ENCODE measurements at regions of chr1 and their contacts with region 1.

Region 1: GRCh38 chr1:91997607-91998195 is 32.1 kb upstream of the EPHX4 start:
- DNase-seq: peak; percentile 75
- H3K4me3 Mint-ChIP-seq: no peak overlapping the region
- H3K27ac Mint-ChIP-seq: no peak overlapping the region
- H3K4me1 Mint-ChIP-seq: no peaks in the 10 kb centered on the region
- H3K27me3 Mint-ChIP-seq: no peaks in the 10 kb centered on the region
- CTCF ChIP-seq: peak; percentile 55

Region 2: GRCh38 chr1:92096317-92096716 is 98.6 kb after region 1 on chr1:
- CTCF ChIA-PET with region 1: no interaction called
- POLR2A ChIA-PET with region 1: no interaction called
- intact Hi-C with region 1: no loop called
- DNase-seq: peak; percentile 37
- H3K4me3 Mint-ChIP-seq: no peak overlapping the region
- H3K27ac Mint-ChIP-seq: peak overlapping the region; percentile 52
- H3K4me1 Mint-ChIP-seq: peaks cover 11% of the 10 kb centered on the region
- H3K27me3 Mint-ChIP-seq: no peaks in the 10 kb centered on the region
- CTCF ChIP-seq: no peak

Region 3: GRCh38 chr1:92298573-92299476 is 301.1 kb after region 1 on chr1 and contains the starts of genes GLMN and RPAP2:
- CTCF ChIA-PET with region 1: interaction called, 13 read pairs
- POLR2A ChIA-PET with region 1: interaction called, 4 read pairs
- intact Hi-C with region 1: loop called (anchors 2 kb)
- DNase-seq: peak; percentile 89
- H3K4me3 Mint-ChIP-seq: peak within 1 kb of the TSS; percentile 97
- H3K27ac Mint-ChIP-seq: peak within 1 kb of the TSS; percentile 96
- H3K4me1 Mint-ChIP-seq: peaks cover 10% of the 10 kb centered on the region
- H3K27me3 Mint-ChIP-seq: no peaks in the 10 kb centered on the region
- CTCF ChIP-seq: peak; percentile 3
- total RNA-seq, gene GLMN: 8.6 and 10.1 TPM in 2 replicates
- total RNA-seq, gene RPAP2: 26.2 and 29.3 TPM in 2 replicates

Measured in MCF 10A (cell line).